HEK293 (cell line): ENCODE measurements at regions of chr9 and their contacts with region 1.

Region 1: GRCh38 chr9:137129456-137130175 is 9.3 kb upstream of the GRIN1 start:
- H3K4me3 ChIP-seq: peak overlapping the region; percentile 88
- H3K27ac ChIP-seq: peak overlapping the region; percentile 66
- H3K4me1 ChIP-seq: no peaks in the 10 kb centered on the region
- CTCF ChIP-seq: no peak

Region 2: GRCh38 chr9:137076636-137077009 is 53.0 kb before region 1 on chr9:
- CTCF ChIA-PET with region 1: no interaction called
- POLR2A ChIA-PET with region 1: no interaction called
- H3K4me3 ChIP-seq: no peak overlapping the region
- H3K27ac ChIP-seq: no peak overlapping the region
- H3K4me1 ChIP-seq: no peaks in the 10 kb centered on the region; the same call in 1 of the 2 replicates
- CTCF ChIP-seq: no peak

Region 3: GRCh38 chr9:137086531-137087408 is 42.8 kb before region 1 on chr9 and contains the start of gene MAN1B1:
- CTCF ChIA-PET with region 1: no interaction called
- POLR2A ChIA-PET with region 1: interaction called, 25 read pairs
- H3K4me3 ChIP-seq: peak within 1 kb of the TSS; percentile 57
- H3K27ac ChIP-seq: peak within 1 kb of the TSS; percentile 70
- H3K4me1 ChIP-seq: 0 out of 2 replicates have a peak, but pooled peaks cover 3% of the 10 kb centered on the region
- CTCF ChIP-seq: no peak

Region 4: DNA sequence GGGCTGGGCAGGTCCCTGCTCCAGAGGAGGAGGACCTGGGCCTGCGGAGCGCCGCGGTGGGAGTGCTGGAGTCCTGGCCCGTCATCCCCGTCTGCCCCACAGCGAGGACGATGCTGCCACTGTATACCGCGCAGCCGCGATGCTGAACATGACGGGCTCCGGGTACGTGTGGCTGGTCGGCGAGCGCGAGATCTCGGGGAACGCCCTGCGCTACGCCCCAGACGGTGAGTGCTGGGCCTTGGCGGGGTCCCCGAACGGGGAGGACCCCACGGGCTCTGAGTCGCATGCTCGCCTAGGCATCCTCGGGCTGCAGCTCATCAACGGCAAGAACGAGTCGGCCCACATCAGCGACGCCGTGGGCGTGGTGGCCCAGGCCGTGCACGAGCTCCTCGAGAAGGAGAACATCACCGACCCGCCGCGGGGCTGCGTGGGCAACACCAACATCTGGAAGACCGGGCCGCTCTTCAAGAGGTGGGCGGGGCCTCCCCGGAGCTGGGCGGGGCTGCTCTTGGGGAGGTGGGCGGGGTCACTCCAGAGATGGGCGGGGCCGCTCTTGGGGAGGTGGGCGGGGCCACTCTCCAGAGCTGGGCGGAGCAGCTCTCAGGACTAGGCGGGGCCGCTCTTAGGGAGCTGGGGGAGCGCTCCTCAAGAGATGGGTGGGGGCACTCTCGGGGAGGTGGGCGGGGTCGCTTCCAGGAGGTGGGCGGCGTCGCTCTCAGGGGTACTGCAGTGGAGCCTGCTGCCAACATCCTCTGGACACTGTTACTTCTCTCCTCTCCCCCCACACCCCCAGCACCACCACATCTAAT is 27.2 kb after region 1 on chr9:
- CTCF ChIA-PET with region 1: interaction called, 6 read pairs
- POLR2A ChIA-PET with region 1: interaction called, 52 read pairs
- H3K4me3 ChIP-seq: no peak overlapping the region
- H3K27ac ChIP-seq: no peak overlapping the region
- H3K4me1 ChIP-seq: no peaks in the 10 kb centered on the region
- CTCF ChIP-seq: no peak

Region 5: DNA sequence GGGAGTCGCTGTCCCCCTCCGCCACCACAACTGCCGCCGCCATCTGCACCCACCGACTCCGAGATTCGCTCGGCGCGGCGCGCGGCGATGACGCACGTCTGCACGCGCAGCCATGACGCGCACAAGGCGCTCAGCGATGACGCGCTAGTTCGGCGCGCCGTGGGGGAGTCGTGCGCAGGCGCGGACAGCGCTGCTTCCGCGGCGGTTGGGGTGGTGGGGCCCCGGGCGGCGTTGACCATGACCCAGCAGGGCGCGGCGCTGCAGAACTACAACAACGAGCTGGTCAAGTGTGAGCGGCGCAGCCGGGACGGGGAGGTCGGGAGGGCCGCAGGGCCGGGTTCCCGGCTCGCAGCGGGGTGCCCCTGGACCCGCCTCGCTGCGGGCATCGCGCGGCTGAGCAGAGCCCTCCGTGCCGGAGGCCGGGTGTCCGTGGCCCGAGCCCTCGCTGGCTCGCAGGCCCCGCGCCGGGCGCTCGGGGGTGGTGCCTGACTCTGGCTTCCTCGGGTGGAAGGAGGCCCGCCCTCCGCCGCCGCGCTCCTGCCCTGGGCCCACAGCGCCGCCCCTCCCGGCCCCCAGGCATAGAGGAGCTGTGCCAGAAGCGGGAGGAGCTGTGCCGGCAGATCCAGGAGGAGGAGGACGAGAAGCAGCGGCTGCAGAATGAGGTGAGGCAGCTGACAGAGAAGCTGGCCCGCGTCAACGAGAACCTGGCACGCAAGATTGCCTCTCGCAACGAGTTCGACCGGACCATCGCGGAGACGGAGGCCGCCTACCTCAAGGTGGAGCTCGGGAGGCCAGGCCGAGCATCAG is 59.1 kb after region 1 on chr9 and contains the starts of genes ANAPC2 and SSNA1:
- CTCF ChIA-PET with region 1: interaction called, 4 read pairs
- POLR2A ChIA-PET with region 1: interaction called, 39 read pairs
- H3K4me3 ChIP-seq: peak within 1 kb of the TSS; percentile 92
- H3K27ac ChIP-seq: peak within 1 kb of the TSS; percentile 92
- H3K4me1 ChIP-seq: peaks cover 11% of the 10 kb centered on the region
- CTCF ChIP-seq: peak; percentile 100

Region 6: DNA sequence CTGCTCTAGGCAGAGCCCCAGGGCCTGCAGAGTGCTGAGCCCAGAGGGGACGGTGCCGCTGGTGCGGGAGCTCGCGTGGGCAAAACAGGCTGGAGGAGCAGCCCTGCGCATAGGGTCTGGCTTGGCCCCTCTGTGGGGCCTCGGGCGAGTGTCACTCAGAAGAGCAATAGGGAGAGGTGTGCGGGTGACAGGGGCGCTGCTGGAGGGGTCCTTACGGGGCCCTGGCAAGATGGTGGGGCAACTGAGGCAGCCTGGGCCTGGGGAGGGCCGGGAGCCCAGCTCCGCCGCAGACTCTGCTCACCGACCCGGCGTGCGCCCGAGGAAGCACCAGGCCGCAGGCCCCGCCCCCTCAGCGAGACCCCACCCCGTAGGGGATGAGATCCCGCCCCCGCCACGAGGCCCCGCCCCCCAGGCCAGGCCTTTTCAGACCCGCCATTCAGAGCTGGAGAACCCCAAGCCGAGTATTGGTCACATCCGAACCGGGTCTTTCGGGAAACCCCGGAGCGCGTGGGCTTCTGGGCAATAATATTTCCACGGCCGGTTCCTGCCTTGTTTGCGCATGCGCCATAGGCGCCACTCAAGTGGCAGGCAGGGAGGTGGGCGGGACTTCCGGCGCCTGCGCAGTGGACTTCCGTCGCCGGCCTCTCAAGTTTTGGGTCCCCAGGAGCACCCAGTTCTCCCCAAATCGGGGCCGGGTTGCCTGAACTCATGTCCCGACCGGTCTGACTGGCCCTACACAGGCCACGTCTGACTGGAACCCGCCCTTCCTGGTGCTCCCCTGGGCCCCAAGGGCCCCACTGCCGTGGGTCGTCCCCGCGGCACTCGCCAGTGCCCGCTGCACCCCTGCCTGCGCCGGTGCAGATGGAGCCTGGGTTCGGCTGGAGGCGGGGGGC is 93.7 kb after region 1 on chr9:
- CTCF ChIA-PET with region 1: interaction called, 69 read pairs
- POLR2A ChIA-PET with region 1: interaction called, 31 read pairs
- H3K4me3 ChIP-seq: peak overlapping the region; percentile 89
- H3K27ac ChIP-seq: peak overlapping the region; percentile 83
- H3K4me1 ChIP-seq: peaks cover 4% of the 10 kb centered on the region
- CTCF ChIP-seq: no peak